HepG2 (cell line): ENCODE measurements at regions of chr17 and their contacts with region 1.

Region 1: DNA sequence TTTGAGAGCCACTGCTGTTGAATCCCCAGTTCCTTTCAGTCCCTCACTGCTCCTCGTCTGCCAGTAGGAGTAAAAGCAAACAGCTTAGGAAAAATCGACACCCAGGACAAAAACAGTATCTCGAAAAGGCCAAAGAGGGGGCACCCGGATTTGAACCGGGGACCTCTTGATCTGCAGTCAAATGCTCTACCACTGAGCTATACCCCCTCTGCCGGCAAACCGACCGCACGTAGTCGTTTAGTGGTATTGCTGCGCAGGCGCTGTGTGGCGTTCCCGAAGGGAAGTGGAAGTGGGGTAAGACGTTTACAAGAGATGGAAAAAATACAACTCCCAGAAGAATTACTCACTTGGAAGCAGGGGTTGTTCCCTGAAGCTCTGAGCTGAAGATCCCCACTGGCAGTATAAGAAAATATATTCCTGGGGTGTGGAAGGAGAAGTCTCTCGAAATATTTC is 2.2 kb upstream of the PLXDC1 start:
- DNase-seq: peak; percentile 90
- ATAC-seq: peak; percentile 68
- H3K4me3 ChIP-seq: peak overlapping the region; percentile 69 to 95 (median 78)
- H3K27ac ChIP-seq: peak overlapping the region; percentile 43
- H3K4me1 ChIP-seq: peaks cover 41% of the 10 kb centered on the region
- H3K27me3 ChIP-seq: peaks cover 8 to 39% of the 10 kb centered on the region in 2 experiments
- CTCF ChIP-seq: no peak; the same call in 1 of the 2 replicates
- EP300 ChIP-seq: no peak; a peak in 1 of 4 replicates
- POLR2A ChIP-seq: no peak
- RAD21 ChIP-seq: peak; percentile 43

Region 2: DNA sequence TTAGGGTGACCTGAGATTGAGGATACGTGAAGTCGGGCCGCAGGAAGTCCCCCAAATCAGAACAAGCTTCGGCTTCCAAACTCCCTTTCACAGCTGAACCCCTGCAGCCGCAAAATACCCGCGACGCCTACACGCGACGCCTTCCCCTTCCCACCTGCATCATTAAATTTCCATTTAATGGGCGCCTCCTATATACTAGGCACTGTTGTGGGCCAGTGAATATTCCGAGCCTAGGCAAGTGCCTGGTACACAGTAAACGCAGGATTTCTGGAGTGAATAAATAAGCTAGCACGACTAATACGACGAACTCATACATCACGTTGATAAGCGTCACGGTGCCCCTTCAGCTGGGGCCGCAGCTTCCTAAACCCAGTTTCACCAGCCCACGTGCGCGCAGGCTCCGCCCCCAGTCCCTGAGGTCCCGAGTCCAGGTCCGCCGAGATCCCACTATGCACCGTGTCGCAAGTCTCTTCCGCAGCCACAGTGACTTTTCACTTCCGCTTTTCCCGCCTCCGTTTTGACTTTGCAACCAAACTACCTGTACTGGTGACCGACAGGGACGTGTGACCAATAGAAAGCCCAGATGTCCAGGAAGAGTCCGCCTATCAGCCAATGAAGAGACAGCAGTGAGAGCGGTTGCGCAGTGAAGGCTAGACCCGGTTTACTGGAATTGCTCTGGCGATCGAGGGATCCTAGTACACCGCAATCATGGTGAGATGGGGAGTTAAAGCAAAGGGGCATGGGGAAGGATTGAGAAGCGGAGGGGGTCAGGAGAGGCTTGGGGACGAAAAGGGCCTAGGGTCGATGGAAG is 401.3 kb before region 1 on chr17 and contains the start of gene PSMB3:
- CTCF ChIA-PET with region 1: no interaction called
- POLR2A ChIA-PET with region 1: no interaction called
- in situ Hi-C with region 1: loop called (anchors 25 kb)
- intact Hi-C with region 1: loop called (anchors 1 kb)
- DNase-seq: peak; percentile 100
- ATAC-seq: peak; percentile 86
- H3K4me3 ChIP-seq: peak within 1 kb of the TSS; percentile 82 to 93 (median 84)
- H3K27ac ChIP-seq: peak within 1 kb of the TSS; percentile 81
- H3K4me1 ChIP-seq: peaks cover 30% of the 10 kb centered on the region
- H3K27me3 ChIP-seq: no peaks in the 10 kb centered on the region; a peak in 1 of 5 replicates
- CTCF ChIP-seq: peak; percentile 2; the same call in 1 of the 2 replicates
- EP300 ChIP-seq: 0 out of 4 replicates have a peak, but pooled peaks of 1 of the 2 experiments have one; percentile 15
- POLR2A ChIP-seq: peak; percentile 77 to 82
- RAD21 ChIP-seq: no peak
- total RNA-seq, gene PSMB3: 517 and 688 TPM in 2 replicates

Region 3: GRCh38 chr17:38912221-38912813 is 241.3 kb before region 1 on chr17:
- CTCF ChIA-PET with region 1: no interaction called
- POLR2A ChIA-PET with region 1: no interaction called
- in situ Hi-C with region 1: no loop called
- intact Hi-C with region 1: loop called (anchors 10 kb)
- DNase-seq: no peak
- ATAC-seq: no peak
- H3K4me3 ChIP-seq: no peak overlapping the region
- H3K27ac ChIP-seq: no peak overlapping the region
- H3K4me1 ChIP-seq: peaks cover 40% of the 10 kb centered on the region
- H3K27me3 ChIP-seq: no peaks in the 10 kb centered on the region
- CTCF ChIP-seq: no peak
- EP300 ChIP-seq: no peak
- POLR2A ChIP-seq: no peak
- RAD21 ChIP-seq: no peak

Region 4: DNA sequence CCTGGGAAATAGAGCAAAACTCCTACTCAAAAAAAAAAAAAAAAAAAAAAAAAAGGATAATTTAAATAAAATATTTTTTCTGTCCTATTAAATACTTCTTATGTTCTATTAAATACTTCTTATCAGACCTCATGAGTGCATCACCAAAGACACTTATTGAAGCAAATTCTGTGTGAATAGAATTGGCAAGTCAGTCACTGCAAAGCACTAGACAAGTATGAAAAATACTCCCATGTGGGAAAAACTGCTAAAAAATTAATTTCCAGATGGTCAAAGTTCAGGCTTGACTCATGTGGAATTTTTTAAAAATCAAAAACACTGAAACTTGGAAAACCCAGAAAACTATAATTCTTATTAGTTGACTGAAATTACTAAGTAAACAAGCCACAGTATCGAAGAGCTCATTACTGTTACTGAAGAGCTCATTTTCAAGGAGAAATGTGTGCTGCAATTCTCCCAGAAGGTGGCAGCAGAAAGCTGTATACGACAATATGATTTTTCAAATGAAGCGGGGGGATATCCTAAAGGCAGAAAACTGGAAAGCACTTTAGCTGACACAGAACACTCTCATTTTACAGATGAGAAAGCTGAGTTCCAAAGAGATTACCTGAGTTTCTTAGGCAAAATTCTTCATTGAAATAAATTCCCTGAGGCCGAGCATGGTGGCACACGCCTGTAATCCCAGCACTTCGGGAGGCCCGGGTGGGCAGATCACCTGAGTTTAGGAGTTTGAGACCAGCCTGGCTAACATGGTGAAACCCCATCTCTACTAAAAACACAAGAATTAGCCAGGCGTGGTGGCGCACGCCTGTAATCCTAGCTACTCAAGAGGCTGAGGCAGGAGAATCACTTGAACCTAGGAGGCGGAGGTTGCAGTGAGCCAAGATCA is 170.5 kb before region 1 on chr17:
- CTCF ChIA-PET with region 1: interaction called, 33 read pairs
- POLR2A ChIA-PET with region 1: interaction called, 12 read pairs
- in situ Hi-C with region 1: loop called (anchors 5 kb)
- intact Hi-C with region 1: loop called (anchors 1 kb)
- DNase-seq: peak; percentile 69
- ATAC-seq: peak; percentile 76
- H3K4me3 ChIP-seq: no peak overlapping the region
- H3K27ac ChIP-seq: no peak overlapping the region
- H3K4me1 ChIP-seq: no peaks in the 10 kb centered on the region
- H3K27me3 ChIP-seq: peaks cover 0 to 2% of the 10 kb centered on the region in 2 experiments; a peak in 1 of 5 replicates
- CTCF ChIP-seq: peak; percentile 87
- EP300 ChIP-seq: no peak
- POLR2A ChIP-seq: no peak
- RAD21 ChIP-seq: peak; percentile 80; the same call in 1 of the 2 replicates

Region 5: GRCh38 chr17:39069114-39069756 is 84.4 kb before region 1 on chr17:
- CTCF ChIA-PET with region 1: interaction called, 24 read pairs
- POLR2A ChIA-PET with region 1: no interaction called
- in situ Hi-C with region 1: loop called (anchors 5 kb)
- intact Hi-C with region 1: loop called (anchors 1 kb)
- DNase-seq: peak; percentile 46
- ATAC-seq: peak; percentile 86
- H3K4me3 ChIP-seq: no peak overlapping the region
- H3K27ac ChIP-seq: no peak overlapping the region
- H3K4me1 ChIP-seq: no peaks in the 10 kb centered on the region
- H3K27me3 ChIP-seq: peaks cover 5 to 37% of the 10 kb centered on the region in 2 experiments; a peak in 4 of 5 replicates
- CTCF ChIP-seq: peak; percentile 77
- EP300 ChIP-seq: no peak
- POLR2A ChIP-seq: no peak
- RAD21 ChIP-seq: peak; percentile 49

Region 6: GRCh38 chr17:39199820-39200069 is 46.1 kb after region 1 on chr17:
- CTCF ChIA-PET with region 1: no interaction called
- POLR2A ChIA-PET with region 1: interaction called, 28 read pairs
- in situ Hi-C with region 1: no loop called
- intact Hi-C with region 1: no loop called
- DNase-seq: peak; percentile 96
- ATAC-seq: peak; percentile 61
- H3K4me3 ChIP-seq: peak overlapping the region; percentile 65 to 92 (median 77)
- H3K27ac ChIP-seq: peak overlapping the region; percentile 97
- H3K4me1 ChIP-seq: peaks cover 59% of the 10 kb centered on the region
- H3K27me3 ChIP-seq: no peaks in the 10 kb centered on the region; a peak in 1 of 5 replicates
- CTCF ChIP-seq: no peak
- EP300 ChIP-seq: no peak
- POLR2A ChIP-seq: no peak; a peak in 2 of 4 replicates
- RAD21 ChIP-seq: no peak

Region 7: GRCh38 chr17:39352511-39352910 is 198.9 kb after region 1 on chr17:
- CTCF ChIA-PET with region 1: no interaction called
- POLR2A ChIA-PET with region 1: no interaction called
- in situ Hi-C with region 1: no loop called
- intact Hi-C with region 1: no loop called
- DNase-seq: no peak
- ATAC-seq: no peak
- H3K4me3 ChIP-seq: no peak overlapping the region
- H3K27ac ChIP-seq: no peak overlapping the region
- H3K4me1 ChIP-seq: peaks cover 6% of the 10 kb centered on the region
- H3K27me3 ChIP-seq: no peaks in the 10 kb centered on the region
- CTCF ChIP-seq: no peak
- EP300 ChIP-seq: no peak
- POLR2A ChIP-seq: no peak
- RAD21 ChIP-seq: no peak